H1 (cell line): ENCODE measurements at regions of chr19 and their contacts with region 1.

Region 1: DNA sequence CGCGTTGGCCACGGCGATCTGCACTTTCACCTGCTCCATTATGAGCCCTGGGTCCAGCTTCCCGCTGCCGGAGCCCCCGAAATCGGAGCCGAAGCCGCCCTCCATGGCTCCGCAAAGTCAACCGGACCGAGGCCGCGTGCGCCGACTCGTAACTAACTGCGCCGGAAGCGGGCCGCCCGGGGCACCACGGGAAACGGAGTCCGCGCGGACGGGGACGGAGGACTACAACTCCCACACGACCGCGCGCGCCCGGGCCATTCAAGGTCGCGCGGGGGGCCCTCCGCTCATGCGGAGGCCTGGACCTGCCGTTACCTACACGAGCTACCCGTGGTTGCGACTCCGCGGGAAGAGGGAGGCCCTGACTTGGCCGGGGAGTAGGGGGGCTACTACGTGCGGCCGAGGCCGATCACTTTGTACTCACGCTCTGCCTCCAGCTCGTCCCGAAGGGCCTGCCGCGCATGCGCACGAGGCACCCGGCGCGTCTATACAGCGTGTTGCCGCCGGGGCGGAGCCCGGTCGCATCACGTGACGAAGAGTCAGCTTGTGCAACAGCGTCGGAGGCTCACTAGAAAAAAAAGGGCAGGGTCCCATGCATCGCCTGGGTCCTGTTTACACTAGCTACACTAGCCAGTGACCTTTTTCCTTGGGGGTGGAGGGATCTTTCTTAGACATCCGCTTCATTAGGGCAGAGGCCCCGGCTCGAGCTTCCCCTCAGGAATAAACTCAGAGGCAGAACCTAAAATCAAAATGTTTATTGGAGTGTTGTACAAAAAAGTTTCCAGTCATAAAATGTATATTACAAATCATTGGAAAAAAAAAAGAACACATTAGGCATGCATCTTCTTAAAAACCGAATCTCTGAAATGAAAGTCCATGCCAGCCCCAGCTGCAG is at the start of gene TIMM13:
- DNase-seq: peak; percentile 95 to 99
- H3K4me3 ChIP-seq: peak within 1 kb of the TSS; percentile 77 to 93 (median 87)
- H3K27ac ChIP-seq: peak within 1 kb of the TSS; percentile 99
- H3K4me1 ChIP-seq: peaks cover 0 to 18% (median 13%) of the 10 kb centered on the region in 4 experiments; a peak in 5 of 7 replicates
- H3K27me3 ChIP-seq: no peaks in the 10 kb centered on the region
- CTCF ChIP-seq: no peak
- EP300 ChIP-seq: no peak
- POLR2A ChIP-seq: peak in 1 of 2 experiments; percentile 59; a peak in 1 of 3 replicates
- RAD21 ChIP-seq: no peak
- total RNA-seq, gene TIMM13: 275 and 277 TPM in 2 replicates

Region 2: DNA sequence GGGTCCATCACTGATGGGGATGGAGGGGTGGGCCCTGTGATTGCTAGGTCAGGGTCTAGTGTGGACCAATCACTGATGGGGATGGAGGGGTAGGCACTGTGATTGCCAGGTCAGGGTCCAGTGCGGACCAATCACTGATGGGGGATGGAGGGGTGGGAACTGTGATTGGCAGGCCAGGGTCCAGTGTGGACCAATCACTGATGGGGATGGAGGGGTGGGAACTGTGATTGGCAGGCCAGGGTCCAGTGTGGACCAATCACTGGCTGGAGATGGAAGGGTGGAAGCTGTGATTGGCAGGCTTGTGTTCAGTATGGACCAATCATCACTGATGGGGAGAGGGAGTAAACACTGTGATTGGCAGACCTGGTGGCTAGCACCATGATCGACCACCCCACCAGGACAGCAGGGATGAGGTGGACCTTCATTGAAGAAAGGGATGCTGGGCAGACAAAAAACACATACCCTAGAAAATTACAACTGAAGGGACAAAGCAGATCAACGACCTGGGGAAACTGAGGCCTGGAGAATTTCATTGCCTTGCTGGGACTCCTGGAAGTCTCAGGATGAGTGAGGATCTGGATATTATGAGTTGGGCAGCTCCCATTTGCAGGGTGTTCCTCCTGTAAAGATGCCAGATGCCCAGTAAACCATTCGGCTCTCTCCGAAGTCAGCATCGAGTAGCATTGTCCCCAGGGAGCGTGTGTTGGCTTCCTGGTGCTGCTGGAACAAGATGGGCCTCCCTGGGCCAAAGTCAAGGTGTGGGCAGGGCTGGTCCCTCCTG is 52.1 kb before region 1 on chr19:
- CTCF ChIA-PET with region 1: no interaction called
- POLR2A ChIA-PET with region 1: no interaction called
- DNase-seq: no peak
- H3K4me3 ChIP-seq: no peak overlapping the region
- H3K27ac ChIP-seq: no peak overlapping the region
- H3K4me1 ChIP-seq: no peaks in the 10 kb centered on the region
- H3K27me3 ChIP-seq: no peaks in the 10 kb centered on the region
- CTCF ChIP-seq: no peak
- EP300 ChIP-seq: no peak
- POLR2A ChIP-seq: no peak
- RAD21 ChIP-seq: no peak

Region 3: DNA sequence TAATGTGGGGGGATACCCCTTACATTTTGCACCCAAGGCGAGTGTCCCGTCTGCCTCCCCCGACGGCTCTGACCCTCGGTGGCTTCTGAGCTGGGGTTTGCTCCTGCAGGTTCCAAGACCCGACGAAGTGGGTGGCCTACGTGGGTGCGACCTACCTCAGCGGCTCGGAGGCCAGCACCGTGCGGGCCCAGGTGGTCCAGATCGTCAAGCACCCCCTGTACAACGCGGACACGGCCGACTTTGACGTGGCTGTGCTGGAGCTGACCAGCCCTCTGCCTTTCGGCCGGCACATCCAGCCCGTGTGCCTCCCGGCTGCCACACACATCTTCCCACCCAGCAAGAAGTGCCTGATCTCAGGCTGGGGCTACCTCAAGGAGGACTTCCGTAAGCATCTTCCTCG is 19.4 kb before region 1 on chr19:
- CTCF ChIA-PET with region 1: interaction called, 5 read pairs
- POLR2A ChIA-PET with region 1: interaction called, 32 read pairs
- DNase-seq: no peak
- H3K4me3 ChIP-seq: no peak overlapping the region
- H3K27ac ChIP-seq: no peak overlapping the region
- H3K4me1 ChIP-seq: no peaks in the 10 kb centered on the region
- H3K27me3 ChIP-seq: peaks cover 0 to 2% (median 0%) of the 10 kb centered on the region in 4 experiments; a peak in 3 of 7 replicates
- CTCF ChIP-seq: no peak
- EP300 ChIP-seq: no peak
- POLR2A ChIP-seq: no peak
- RAD21 ChIP-seq: no peak

Region 4: DNA sequence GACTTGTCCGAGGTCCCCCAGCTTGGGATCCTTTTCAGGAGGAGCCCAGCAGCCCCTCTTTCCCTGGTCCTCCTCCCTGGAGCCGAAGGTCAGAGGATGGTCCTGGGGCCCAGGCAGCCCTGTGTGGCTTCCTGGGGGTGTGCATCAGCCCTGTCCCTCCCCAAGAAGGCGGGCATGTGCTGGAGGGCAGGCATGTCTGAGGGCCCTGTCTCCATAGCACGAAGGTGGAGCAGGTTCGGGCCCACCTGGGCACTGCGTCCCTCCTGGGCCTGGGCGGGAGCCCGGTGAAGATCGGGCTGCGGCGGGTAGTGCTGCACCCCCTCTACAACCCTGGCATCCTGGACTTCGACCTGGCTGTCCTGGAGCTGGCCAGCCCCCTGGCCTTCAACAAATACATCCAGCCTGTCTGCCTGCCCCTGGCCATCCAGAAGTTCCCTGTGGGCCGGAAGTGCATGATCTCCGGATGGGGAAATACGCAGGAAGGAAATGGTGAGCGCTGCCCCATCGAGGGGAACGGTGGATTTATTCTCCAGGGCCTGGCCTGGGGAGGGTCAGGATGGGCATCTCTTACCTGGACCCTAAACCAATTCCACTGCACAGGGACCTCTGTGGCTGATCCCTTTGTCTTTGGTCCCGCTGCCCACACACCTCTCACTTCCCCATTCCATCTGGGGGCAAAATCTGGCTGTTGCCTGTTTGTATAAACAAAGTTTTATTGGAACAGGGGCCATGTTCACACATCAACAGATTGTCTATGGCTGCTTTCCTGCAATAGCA is 11.2 kb before region 1 on chr19:
- CTCF ChIA-PET with region 1: interaction called, 3 read pairs
- POLR2A ChIA-PET with region 1: interaction called, 32 read pairs
- DNase-seq: no peak
- H3K4me3 ChIP-seq: no peak overlapping the region
- H3K27ac ChIP-seq: no peak overlapping the region
- H3K4me1 ChIP-seq: peaks cover 0 to 4% (median 0%) of the 10 kb centered on the region in 4 experiments; a peak in 2 of 7 replicates
- H3K27me3 ChIP-seq: no peaks in the 10 kb centered on the region; a peak in 2 of 7 replicates
- CTCF ChIP-seq: no peak
- EP300 ChIP-seq: no peak
- POLR2A ChIP-seq: no peak
- RAD21 ChIP-seq: no peak

Region 5: GRCh38 chr19:2438178-2438864 is 10.6 kb after region 1 on chr19:
- CTCF ChIA-PET with region 1: interaction called, 3 read pairs
- POLR2A ChIA-PET with region 1: interaction called, 84 read pairs
- DNase-seq: no peak
- H3K4me3 ChIP-seq: no peak overlapping the region
- H3K27ac ChIP-seq: 0 out of 2 replicates have a peak overlapping the region, but pooled peaks have one; percentile 19
- H3K4me1 ChIP-seq: no peaks in the 10 kb centered on the region
- H3K27me3 ChIP-seq: no peaks in the 10 kb centered on the region
- CTCF ChIP-seq: no peak
- EP300 ChIP-seq: no peak
- POLR2A ChIP-seq: no peak
- RAD21 ChIP-seq: no peak

Region 6: DNA sequence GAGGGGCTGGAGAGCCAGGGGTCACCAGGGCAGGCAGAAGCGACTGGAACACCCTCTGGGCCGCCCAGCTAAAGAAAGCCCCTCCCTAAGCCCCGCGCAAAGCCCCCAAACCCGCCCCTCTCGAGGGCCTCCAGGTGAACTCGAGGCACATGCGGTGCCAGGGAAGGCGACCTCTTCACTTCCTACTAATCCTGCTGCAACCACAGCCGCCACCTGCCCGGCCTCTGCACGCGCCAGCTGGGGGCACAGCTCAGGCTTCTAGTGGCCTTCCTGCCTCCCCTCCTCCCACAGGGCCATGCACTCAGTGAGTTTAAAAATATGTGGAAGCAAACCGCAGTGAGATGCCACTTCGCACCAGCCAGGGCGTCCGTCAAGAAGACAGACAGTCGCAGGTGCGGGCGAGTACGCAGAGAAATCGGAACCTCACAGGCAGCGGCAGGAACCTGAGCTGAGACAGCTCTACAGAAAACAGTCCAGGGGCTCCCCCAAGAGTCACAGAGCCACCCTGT is 18.6 kb after region 1 on chr19:
- CTCF ChIA-PET with region 1: interaction called, 3 read pairs
- POLR2A ChIA-PET with region 1: interaction called, 84 read pairs
- DNase-seq: no peak
- H3K4me3 ChIP-seq: no peak overlapping the region
- H3K27ac ChIP-seq: no peak overlapping the region
- H3K4me1 ChIP-seq: peaks cover 0 to 7% (median 0%) of the 10 kb centered on the region in 4 experiments; a peak in 1 of 7 replicates
- H3K27me3 ChIP-seq: no peaks in the 10 kb centered on the region
- CTCF ChIP-seq: no peak
- EP300 ChIP-seq: no peak
- POLR2A ChIP-seq: no peak
- RAD21 ChIP-seq: no peak

Region 7: GRCh38 chr19:2455851-2456570 is 28.3 kb after region 1 on chr19:
- CTCF ChIA-PET with region 1: interaction called, 4 read pairs
- POLR2A ChIA-PET with region 1: interaction called, 76 read pairs
- DNase-seq: no peak
- H3K4me3 ChIP-seq: peak overlapping the region; percentile 83 to 100 (median 85)
- H3K27ac ChIP-seq: no peak overlapping the region; the same call in 1 of the 2 replicates
- H3K4me1 ChIP-seq: peaks cover 0 to 5% (median 3%) of the 10 kb centered on the region in 4 experiments; a peak in 5 of 7 replicates
- H3K27me3 ChIP-seq: no peaks in the 10 kb centered on the region
- CTCF ChIP-seq: no peak
- EP300 ChIP-seq: no peak
- POLR2A ChIP-seq: 0 out of 3 replicates have a peak, but pooled peaks of 1 of the 2 experiments have one; percentile 3
- RAD21 ChIP-seq: no peak

Region 8: DNA sequence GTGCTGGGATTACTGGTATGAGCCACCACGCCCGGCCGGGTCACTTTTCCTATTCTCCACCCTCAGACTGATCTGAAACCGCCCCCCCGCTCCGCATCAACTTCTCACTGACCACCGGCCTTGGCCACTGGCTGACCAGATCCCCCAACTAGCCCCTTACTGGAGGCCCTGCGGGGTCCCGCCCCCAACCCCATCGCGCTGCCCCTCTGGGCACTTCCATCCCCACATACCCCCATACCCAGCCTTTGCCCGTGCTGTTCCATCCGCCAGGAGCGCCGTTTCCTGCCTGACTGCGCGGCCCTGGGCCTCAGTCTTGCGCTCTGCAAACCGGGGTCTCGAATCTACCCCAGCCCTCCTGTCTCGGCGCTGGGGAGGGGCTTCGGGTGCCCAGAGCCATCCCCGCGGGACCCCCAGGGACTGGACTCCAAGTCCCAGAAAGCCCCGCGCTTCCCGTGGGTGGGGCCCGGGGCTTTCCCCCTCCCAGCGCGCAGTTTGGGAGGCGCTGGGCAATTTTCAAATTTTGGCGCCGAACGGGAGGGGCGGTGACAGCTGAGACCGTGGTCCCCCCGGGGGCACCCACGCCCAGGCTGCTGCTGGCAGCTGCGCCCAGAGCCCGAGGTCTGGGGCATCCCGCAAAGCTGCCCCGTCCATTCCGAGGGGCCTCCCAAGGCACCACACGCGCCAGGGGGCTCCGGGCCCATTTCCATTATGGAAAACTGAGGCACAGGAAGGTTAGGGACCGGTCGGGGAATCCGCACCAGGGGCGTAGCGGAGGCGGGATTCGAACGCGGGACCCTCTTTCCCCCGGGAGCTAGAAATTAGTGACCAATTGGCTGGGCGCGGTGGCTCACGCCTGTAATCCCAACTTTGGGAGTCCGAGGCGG is 34.3 kb after region 1 on chr19:
- CTCF ChIA-PET with region 1: interaction called, 3 read pairs
- POLR2A ChIA-PET with region 1: interaction called, 76 read pairs
- DNase-seq: peak in 1 of 2 experiments; percentile 82
- H3K4me3 ChIP-seq: peak overlapping the region; percentile 37 to 65 (median 60)
- H3K27ac ChIP-seq: no peak overlapping the region
- H3K4me1 ChIP-seq: peaks cover 0 to 4% (median 0%) of the 10 kb centered on the region in 4 experiments; a peak in 2 of 7 replicates
- H3K27me3 ChIP-seq: no peaks in the 10 kb centered on the region
- CTCF ChIP-seq: peak in 1 of 3 experiments; percentile 10; a peak in 1 of 4 replicates
- EP300 ChIP-seq: no peak
- POLR2A ChIP-seq: no peak
- RAD21 ChIP-seq: no peak